GM12878 (cell line): ENCODE measurements at regions of chr10 and their contacts with region 1.

Region 1: GRCh38 chr10:64286533-64286932 is 765.3 kb downstream of the REEP3 start:
- DNase-seq: no peak
- ATAC-seq: no peak
- H3K4me3 ChIP-seq: no peak overlapping the region
- H3K27ac ChIP-seq: no peak overlapping the region
- H3K4me1 ChIP-seq: no peaks in the 10 kb centered on the region
- H3K27me3 ChIP-seq: no peaks in the 10 kb centered on the region; a peak in 1 of 4 replicates
- CTCF ChIP-seq: no peak
- EP300 ChIP-seq: no peak
- POLR2A ChIP-seq: no peak
- RAD21 ChIP-seq: no peak

Region 2: DNA sequence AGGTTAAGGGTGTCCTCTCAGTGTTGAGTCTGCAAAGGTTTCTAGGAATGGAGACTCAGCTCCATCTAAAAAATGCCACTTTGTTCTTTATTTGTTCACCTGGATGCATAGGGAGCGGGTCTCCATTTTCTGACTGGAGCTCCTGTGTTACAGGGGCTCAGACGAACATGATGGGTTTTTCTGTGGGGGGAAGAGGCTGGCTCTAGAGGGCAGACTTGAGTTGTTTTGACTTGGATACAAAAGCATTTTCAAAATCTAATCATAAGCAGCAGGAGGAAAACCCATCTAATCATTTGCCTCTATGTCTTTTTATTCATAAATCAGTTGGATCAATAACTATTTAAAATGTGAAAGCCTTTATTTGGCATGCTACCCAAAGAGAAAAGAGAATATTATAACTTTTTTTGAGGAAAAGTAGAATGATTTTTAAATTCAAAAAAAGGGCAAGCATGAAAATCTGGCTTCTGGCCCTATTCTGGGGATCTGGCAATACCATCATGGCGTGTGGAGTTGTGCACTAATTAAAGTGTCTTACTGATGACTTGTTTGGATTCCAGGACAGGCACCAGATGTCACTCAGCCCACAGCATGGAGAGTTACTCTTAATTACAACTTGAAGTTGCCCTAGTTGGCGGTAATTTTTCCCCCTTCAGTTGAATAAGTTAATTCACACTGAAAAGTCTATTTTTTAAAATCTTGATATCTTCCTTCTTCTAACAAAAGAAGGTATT is 170.5 kb before region 1 on chr10:
- CTCF ChIA-PET with region 1: no interaction called
- POLR2A ChIA-PET with region 1: no interaction called
- RAD21 ChIA-PET with region 1: interaction called, 4 read pairs
- SMC1A ChIA-PET with region 1: no interaction called
- in situ Hi-C with region 1: no loop called
- intact Hi-C with region 1: loop called (anchors 10 kb)
- DNase-seq: no peak
- ATAC-seq: peak; percentile 72
- H3K4me3 ChIP-seq: no peak overlapping the region
- H3K27ac ChIP-seq: no peak overlapping the region
- H3K4me1 ChIP-seq: no peaks in the 10 kb centered on the region
- H3K27me3 ChIP-seq: no peaks in the 10 kb centered on the region; a peak in 1 of 4 replicates
- CTCF ChIP-seq: peak; percentile 45 to 49 (median 48); a peak in 4 of 6 replicates
- EP300 ChIP-seq: no peak
- POLR2A ChIP-seq: no peak
- RAD21 ChIP-seq: peak; percentile 54

Region 3: GRCh38 chr10:64142395-64142794 is 144.1 kb before region 1 on chr10:
- CTCF ChIA-PET with region 1: no interaction called
- POLR2A ChIA-PET with region 1: no interaction called
- RAD21 ChIA-PET with region 1: no interaction called
- SMC1A ChIA-PET with region 1: no interaction called
- in situ Hi-C with region 1: no loop called
- intact Hi-C with region 1: no loop called
- DNase-seq: no peak
- ATAC-seq: peak; percentile 43; the same call in 1 of the 3 replicates
- H3K4me3 ChIP-seq: no peak overlapping the region
- H3K27ac ChIP-seq: no peak overlapping the region
- H3K4me1 ChIP-seq: no peaks in the 10 kb centered on the region
- H3K27me3 ChIP-seq: no peaks in the 10 kb centered on the region
- CTCF ChIP-seq: no peak
- EP300 ChIP-seq: no peak
- POLR2A ChIP-seq: no peak
- RAD21 ChIP-seq: no peak

Region 4: GRCh38 chr10:64234489-64234888 is 52.0 kb before region 1 on chr10:
- CTCF ChIA-PET with region 1: no interaction called
- POLR2A ChIA-PET with region 1: no interaction called
- RAD21 ChIA-PET with region 1: no interaction called
- SMC1A ChIA-PET with region 1: no interaction called
- in situ Hi-C with region 1: no loop called
- intact Hi-C with region 1: loop called (anchors 5 kb)
- DNase-seq: no peak
- ATAC-seq: no peak
- H3K4me3 ChIP-seq: no peak overlapping the region
- H3K27ac ChIP-seq: no peak overlapping the region
- H3K4me1 ChIP-seq: no peaks in the 10 kb centered on the region
- H3K27me3 ChIP-seq: no peaks in the 10 kb centered on the region
- CTCF ChIP-seq: no peak
- EP300 ChIP-seq: no peak
- POLR2A ChIP-seq: no peak
- RAD21 ChIP-seq: no peak

Region 5: DNA sequence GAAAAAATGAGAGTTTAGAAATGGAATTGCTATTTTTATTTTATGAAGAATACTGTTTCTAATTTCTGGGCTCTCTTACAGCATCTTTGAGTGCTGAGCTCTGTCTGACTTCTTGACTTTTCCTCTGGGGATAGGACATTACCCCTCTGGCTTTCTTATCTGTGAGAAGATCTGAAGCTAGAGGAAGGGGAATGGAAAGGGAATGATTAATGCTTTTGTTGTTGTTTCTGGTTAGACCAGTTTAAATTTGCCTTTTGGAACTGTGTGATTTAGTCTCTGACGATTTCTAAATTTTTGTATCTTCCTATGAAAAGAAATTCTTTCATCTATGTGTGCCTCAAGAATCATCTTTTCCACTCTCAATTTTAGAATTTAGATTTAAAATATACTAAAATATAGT is 46.0 kb after region 1 on chr10:
- CTCF ChIA-PET with region 1: no interaction called
- POLR2A ChIA-PET with region 1: no interaction called
- RAD21 ChIA-PET with region 1: no interaction called
- SMC1A ChIA-PET with region 1: no interaction called
- in situ Hi-C with region 1: no loop called
- intact Hi-C with region 1: no loop called
- DNase-seq: no peak
- ATAC-seq: no peak
- H3K4me3 ChIP-seq: no peak overlapping the region
- H3K27ac ChIP-seq: no peak overlapping the region
- H3K4me1 ChIP-seq: no peaks in the 10 kb centered on the region
- H3K27me3 ChIP-seq: no peaks in the 10 kb centered on the region
- CTCF ChIP-seq: no peak
- EP300 ChIP-seq: no peak
- POLR2A ChIP-seq: no peak
- RAD21 ChIP-seq: no peak